ENCODE measurements at regions of chr6 and their contacts with region 1.

Region 1: GRCh38 chr6:31139599-31139998 is 733 bp upstream of the PSORS1C2 start:
- DNase-seq: no peak
- H3K4me3 ChIP-seq: no peak overlapping the region
- H3K27ac ChIP-seq: no peak overlapping the region
- H3K4me1 ChIP-seq: no peaks in the 10 kb centered on the region
- H3K27me3 ChIP-seq: no peaks in the 10 kb centered on the region
- CTCF ChIP-seq: no peak
- EP300 ChIP-seq: no peak
- POLR2A ChIP-seq: no peak

Region 2: DNA sequence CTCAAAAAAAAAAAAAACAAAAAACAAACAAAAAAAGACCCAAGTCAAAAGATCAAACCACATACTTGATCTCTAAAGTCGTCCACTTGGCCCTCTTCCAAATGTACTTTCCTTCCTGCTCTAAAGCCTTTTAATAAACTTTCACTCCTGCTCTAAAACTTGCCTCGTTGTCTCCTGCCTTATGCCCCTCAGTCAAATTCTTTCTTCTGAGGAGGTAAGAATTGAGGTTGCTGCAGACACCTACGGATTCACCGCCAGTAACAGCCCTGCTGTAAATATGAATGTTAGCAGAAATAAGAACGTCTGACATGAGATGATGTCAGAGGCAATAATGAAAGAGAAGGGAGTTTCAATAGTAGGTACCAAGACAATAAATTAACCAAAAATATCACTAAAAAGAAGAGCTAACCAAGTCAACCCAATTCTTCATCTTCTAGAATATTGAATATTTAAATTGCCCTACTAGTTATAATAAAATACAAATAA is 42.0 kb before region 1 on chr6:
- intact Hi-C with region 1: no loop called
- DNase-seq: no peak
- H3K4me3 ChIP-seq: no peak overlapping the region
- H3K27ac ChIP-seq: no peak overlapping the region
- H3K4me1 ChIP-seq: no peaks in the 10 kb centered on the region
- H3K27me3 ChIP-seq: no peaks in the 10 kb centered on the region
- CTCF ChIP-seq: no peak
- EP300 ChIP-seq: no peak
- POLR2A ChIP-seq: no peak

Region 3: DNA sequence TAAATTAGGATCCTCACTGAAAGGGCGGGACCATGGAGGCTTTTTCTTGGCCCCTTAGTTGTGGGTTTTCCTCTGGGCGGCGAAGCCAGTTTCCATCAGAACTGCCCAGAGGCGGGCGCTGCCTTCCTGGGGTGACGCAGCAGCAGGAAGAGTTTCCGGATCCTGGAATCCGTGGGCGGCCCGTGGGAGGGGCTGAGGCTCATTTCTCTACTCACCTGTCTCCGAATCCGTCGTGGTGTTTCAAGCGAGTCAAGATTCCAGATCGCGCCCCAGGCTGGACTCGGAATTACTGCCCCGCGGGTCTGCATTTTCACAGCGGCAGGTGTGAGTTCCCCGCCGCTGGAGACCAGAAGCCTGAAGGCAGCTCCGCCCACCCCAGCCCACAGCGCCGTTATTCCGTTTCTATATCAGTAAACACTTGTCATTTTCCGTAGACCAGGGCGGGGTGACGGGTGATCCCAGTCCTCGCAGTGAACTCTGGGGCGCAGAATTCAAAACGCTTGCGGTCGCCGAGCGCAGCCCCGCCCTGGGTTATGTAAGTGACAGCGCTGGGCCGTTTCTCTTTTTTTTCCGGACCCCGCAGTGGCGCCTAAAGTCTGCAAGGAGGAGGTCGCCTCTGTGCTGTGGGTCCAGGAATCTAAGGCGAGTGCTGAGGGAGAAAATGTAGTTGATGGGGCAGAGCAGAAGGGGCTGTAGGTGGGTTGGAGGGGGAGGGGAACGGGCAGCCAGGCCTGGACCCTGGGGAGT is 58.1 kb after region 1 on chr6:
- intact Hi-C with region 1: loop called (anchors 5 kb)
- DNase-seq: peak; percentile 88 to 91 (median 89)
- H3K4me3 ChIP-seq: peak overlapping the region; percentile 81
- H3K27ac ChIP-seq: peak overlapping the region; percentile 80 to 88
- H3K4me1 ChIP-seq: peaks cover 2% of the 10 kb centered on the region
- H3K27me3 ChIP-seq: no peaks in the 10 kb centered on the region
- CTCF ChIP-seq: peak in 2 of 3 donors; percentile 6 to 17
- EP300 ChIP-seq: peak; percentile 29
- POLR2A ChIP-seq: peak; percentile 78

Region 4: DNA sequence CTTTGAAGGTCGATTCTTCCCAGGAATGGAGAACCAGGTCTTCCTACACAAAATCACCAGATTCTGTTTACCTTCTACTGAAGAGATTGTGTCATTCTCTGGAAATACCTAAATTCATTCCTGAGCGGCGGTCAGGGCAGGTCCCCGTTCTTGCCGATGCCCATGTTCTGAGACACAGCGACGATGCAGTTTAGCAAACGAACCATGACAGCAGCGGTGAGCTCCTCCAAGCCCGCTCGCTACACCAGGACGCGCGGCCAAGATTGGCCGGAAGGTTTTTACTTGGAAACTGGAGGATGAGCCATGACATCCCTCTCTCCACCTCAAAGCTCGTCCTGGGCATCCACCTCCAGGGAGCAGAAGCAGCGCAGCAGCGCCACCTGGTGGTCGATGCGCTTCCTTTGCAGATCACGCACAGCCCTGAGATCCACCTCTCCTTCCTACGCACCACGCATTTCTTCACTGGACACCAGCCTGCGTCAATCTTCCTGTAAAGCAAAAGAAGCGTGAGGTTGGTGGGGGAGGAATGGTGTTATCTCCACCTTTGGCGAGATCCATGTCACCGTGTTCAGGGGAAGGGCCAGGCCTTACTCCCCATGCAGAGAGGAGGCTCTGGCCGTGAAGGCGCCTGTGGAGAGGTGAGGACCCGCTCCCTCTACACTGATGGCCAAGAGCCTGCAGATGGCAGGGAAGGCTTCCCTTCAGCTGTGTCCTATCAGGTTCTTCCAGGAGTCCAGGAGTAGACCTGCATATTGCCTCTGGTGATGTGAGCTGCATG is 227.3 kb after region 1 on chr6:
- intact Hi-C with region 1: loop called (anchors 2 to 5 kb)
- DNase-seq: peak; percentile 83 to 93 (median 90)
- H3K4me3 ChIP-seq: no peak overlapping the region
- H3K27ac ChIP-seq: no peak overlapping the region
- H3K4me1 ChIP-seq: no peaks in the 10 kb centered on the region
- H3K27me3 ChIP-seq: no peaks in the 10 kb centered on the region
- CTCF ChIP-seq: peak; percentile 80 to 93 (median 93)
- EP300 ChIP-seq: no peak
- POLR2A ChIP-seq: no peak